ENCODE measurements at regions of chr5 and their contacts with region 1.

Region 1: DNA sequence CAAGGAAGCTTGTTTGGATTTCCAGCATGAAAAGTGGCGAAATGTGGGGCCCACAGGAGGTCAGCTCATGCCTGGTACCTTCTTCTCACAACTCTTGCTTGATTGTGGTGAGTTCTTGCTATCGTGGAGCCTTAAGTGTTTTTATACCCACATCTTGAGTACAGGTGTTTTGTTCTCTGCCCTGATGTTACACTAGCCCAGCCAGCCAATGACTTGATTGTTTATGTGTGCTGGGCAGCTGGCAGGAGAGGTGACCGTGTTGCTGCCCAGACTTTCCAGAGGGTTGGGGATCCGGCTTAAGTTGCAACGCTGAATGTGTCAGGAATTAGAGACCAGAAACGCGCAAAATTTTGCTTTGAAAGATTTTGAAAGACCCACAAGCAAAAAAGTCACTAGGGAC is 24.0 kb upstream of the TPPP start:
- DNase-seq: no peak
- ATAC-seq: peak in 3 of 4 donors; percentile 14 to 19 (median 18)
- H3K4me3 ChIP-seq: no peak overlapping the region
- H3K27ac ChIP-seq: peak overlapping the region in 1 of 4 donors; percentile 12
- H3K4me1 ChIP-seq: peaks cover 0 to 10% (median 0%) of the 10 kb centered on the region in 3 donors
- H3K27me3 ChIP-seq: no peaks in the 10 kb centered on the region
- CTCF ChIP-seq: no peak

Region 2: DNA sequence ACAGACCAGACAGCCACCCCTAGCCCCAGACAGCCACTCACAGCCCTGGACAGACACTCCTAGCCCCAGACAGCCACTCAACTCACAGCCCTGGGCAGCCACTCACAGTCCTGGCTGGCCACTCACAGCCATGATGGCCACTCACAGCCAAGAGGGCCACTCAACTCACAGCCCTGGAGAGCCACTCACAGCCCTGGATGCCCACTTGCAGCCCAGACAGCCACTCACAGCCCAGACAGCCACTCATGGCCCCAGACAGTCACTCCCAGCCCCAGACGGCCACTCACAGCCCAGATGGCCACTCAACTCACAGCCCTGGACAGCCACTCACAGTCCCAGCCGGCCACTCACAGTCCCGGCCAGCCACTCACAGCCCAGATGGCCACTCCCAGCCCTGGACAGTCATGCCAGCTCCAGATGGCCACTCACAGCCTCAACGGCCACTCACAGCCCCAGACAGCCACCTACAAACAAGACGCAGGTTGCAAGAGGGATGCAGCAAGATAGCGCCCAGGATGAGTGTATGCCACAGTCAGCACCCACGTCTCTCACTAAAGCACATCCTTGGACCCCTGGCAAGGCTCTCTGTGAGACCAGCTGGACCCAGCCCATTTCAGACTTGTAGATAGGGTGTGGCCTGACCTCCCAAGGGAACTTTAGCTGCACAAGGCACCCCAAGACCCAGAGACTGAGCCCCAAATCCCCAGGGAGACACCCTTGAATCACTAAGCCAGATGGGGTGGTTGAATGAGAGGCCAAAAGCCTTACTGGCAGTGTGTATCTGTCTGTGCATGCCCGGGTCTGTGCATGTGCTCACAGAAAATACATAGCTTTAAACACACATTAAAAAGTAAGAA is 44.9 kb after region 1 on chr5:
- intact Hi-C with region 1: no loop called
- DNase-seq: peak in 5 of 6 donors; percentile 14 to 70 (median 52)
- ATAC-seq: no peak
- H3K4me3 ChIP-seq: no peak overlapping the region
- H3K27ac ChIP-seq: no peak overlapping the region
- H3K4me1 ChIP-seq: peaks cover 5 to 16% (median 7%) of the 10 kb centered on the region in 3 donors
- H3K27me3 ChIP-seq: no peaks in the 10 kb centered on the region
- CTCF ChIP-seq: no peak

Region 3: DNA sequence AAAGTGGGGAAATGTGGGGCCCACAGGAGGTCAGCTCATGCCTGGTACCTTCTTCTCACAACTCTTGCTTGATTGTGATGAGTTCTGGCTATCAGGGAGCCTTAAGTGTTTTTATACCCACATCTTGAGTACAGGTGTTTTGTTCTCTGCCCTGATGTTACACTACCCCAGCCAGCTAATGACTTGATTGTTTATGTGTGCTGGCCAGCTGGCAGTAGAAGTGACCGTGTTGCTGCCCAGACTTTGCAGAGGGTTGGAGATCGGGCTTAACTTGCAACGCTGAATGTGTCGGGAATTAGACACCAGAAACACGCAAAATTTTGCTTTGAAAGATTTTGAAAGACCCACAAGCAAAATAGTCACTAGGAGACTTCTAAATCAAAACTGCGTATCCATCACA is 84.3 kb after region 1 on chr5:
- intact Hi-C with region 1: loop called in 1 of 3 experiments (anchors 5 kb)
- DNase-seq: no peak
- ATAC-seq: peak; percentile 29 to 44 (median 38)
- H3K4me3 ChIP-seq: no peak overlapping the region
- H3K27ac ChIP-seq: peak overlapping the region in 1 of 4 donors; percentile 2
- H3K4me1 ChIP-seq: peaks cover 0 to 5% (median 0%) of the 10 kb centered on the region in 3 donors
- H3K27me3 ChIP-seq: no peaks in the 10 kb centered on the region
- CTCF ChIP-seq: no peak

Region 4: GRCh38 chr5:989961-990530 is 272.9 kb after region 1 on chr5:
- intact Hi-C with region 1: no loop called
- DNase-seq: peak in 1 of 6 donors; percentile 56
- ATAC-seq: peak; percentile 48 to 76 (median 65)
- H3K4me3 ChIP-seq: no peak overlapping the region
- H3K27ac ChIP-seq: peak overlapping the region in 1 of 4 donors; percentile 37
- H3K4me1 ChIP-seq: no peaks in the 10 kb centered on the region
- H3K27me3 ChIP-seq: no peaks in the 10 kb centered on the region
- CTCF ChIP-seq: no peak